ENCODE measurements at regions of chr11 and their contacts with region 1.

Region 1: DNA sequence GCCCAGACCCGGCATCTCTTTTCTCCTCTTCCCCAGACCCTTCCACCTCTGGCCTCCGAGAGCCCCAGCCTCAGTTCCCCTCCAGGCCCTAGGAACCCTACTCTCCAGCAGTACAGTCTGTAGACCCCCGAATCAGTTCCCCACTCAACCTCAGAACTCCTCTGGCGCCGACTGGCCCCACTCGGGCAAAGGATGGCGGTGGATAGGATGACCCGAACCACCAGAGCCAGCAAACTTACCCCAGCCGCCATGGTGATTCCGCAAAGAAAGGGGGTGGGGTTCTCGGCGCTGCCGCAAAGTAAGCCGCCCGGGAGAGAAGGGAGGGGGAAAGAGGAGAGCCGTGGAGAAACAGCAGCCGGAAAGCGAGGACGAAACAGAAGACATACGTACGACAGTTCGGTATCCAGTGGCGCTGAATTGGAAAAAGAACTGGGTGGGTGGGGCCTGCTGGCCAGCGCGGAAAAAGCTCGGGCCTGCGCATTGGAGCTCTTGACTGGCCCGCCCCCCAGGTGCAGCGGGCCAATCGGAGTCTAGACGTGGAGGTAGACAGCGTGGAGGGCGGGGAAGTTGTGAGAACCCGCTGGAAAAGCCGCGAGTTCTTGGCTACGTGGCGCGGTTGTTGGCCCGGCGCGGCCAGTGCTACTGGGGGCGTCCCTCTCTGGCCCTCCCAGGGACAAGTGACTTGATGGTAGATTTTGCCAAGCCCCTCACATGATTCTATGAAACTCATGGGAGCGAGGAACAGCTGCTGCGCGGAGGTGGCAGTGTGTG is at the start of gene EEF1G:
- DNase-seq: peak; percentile 99
- ATAC-seq: peak; percentile 93
- H3K4me3 ChIP-seq: peak within 1 kb of the TSS; percentile 80 to 96 (median 95)
- H3K27ac ChIP-seq: peak within 1 kb of the TSS; percentile 85
- H3K4me1 ChIP-seq: peaks cover 63% of the 10 kb centered on the region
- H3K27me3 ChIP-seq: no peaks in the 10 kb centered on the region; a peak in 1 of 5 replicates
- CTCF ChIP-seq: no peak; the same call in 1 of the 2 replicates
- EP300 ChIP-seq: no peak
- POLR2A ChIP-seq: peak; percentile 89 to 91
- RAD21 ChIP-seq: no peak
- total RNA-seq, gene EEF1G: 1,787 and 2,092 TPM in 2 replicates

Region 2: DNA sequence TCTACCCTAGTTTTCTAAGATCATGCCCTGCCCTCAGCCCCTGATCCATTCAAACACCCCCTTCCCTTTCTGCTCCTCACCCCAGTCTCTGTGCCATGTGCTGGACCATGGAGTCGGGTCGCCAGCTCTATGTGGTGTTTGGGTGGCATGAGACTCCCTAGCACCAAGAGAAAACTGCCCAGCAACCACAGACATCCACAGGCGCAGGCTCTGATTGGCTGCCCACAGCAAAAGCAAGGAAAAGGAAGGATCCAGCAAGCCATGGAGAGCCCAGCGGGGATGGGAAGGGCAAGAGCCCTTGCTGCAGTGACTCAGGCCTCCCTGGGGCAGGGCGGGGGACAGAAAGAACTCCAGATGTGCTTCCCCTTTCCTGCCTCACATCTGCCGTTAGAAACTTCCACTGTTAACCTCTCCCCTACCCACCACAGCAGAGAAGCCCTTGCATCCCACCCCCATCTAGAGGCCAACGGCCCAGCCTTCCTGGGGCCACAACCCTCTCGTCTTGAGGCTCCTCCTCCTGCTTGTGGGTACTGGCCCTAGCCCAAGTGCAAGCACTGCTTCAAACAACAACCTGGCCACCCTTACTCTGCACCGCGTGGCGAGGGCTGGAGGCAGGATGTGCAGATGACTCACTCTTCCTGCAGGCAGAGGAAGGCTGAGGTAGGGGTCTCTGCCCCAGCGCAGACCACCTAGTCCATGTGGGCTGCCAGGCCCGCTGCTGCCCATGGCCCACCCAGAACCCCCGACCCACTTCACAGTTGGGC is 17.5 kb before region 1 on chr11:
- CTCF ChIA-PET with region 1: no interaction called
- POLR2A ChIA-PET with region 1: interaction called, 22 read pairs
- in situ Hi-C with region 1: no loop called
- intact Hi-C with region 1: no loop called
- DNase-seq: no peak
- ATAC-seq: peak; percentile 1
- H3K4me3 ChIP-seq: no peak overlapping the region
- H3K27ac ChIP-seq: peak overlapping the region; percentile 44
- H3K4me1 ChIP-seq: peaks cover 85% of the 10 kb centered on the region
- H3K27me3 ChIP-seq: no peaks in the 10 kb centered on the region
- CTCF ChIP-seq: no peak
- EP300 ChIP-seq: no peak
- POLR2A ChIP-seq: no peak
- RAD21 ChIP-seq: no peak

Region 3: DNA sequence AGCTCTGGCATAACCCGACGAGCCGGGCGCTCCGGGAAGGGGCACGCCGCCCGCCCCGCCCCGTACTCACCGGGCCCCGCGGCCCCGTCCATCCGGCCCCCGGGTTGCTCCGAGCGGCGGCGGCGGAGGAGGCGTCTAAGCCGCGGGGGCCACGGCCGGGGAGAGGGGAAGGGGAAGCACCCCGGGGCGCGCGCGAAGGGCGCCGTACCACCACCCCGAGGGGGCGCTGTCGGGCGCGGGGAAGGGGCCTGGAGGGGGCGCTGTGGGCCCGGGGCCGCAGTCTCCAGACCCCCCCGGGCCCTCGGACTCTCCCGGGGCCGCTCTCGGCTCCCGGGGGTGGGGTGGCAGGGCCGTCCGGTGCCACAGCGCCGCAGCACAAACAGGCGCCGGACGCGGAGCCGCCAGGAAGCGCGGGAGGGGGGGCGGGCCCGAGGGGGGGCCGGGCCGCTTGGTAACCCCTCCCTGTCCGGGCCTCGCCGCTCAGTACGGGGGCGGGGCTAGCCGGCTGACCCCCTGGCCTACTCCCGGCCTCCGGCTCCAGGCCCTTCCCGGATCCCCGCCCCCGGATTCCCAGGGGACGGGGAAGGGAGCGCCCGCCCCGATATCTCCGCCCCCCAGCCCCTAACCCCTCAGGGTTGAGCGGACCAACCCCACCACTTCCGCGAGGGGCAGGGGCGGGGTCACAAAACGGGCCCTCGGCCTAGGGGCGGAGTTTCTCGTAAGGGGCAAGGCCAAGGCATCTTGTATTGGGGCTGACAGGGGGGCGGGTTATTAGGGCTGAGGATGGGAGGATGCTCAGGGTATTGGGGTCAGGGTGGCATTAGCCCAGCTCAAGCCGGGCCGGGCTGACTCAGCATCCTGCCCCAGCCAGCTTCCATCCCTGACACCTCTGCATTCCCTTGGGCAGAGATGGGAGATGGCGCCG is 38.9 kb after region 1 on chr11 and contains the starts of genes EML3 and ROM1:
- CTCF ChIA-PET with region 1: no interaction called
- POLR2A ChIA-PET with region 1: interaction called, 12 read pairs
- in situ Hi-C with region 1: no loop called
- intact Hi-C with region 1: no loop called
- DNase-seq: peak; percentile 70
- ATAC-seq: peak; percentile 74
- H3K4me3 ChIP-seq: peak within 1 kb of the TSS; percentile 77 to 93 (median 77)
- H3K27ac ChIP-seq: peak within 1 kb of the TSS; percentile 64
- H3K4me1 ChIP-seq: peaks cover 50% of the 10 kb centered on the region
- H3K27me3 ChIP-seq: no peaks in the 10 kb centered on the region; a peak in 1 of 5 replicates
- CTCF ChIP-seq: peak; percentile 74
- EP300 ChIP-seq: no peak
- POLR2A ChIP-seq: peak in 1 of 2 experiments; percentile 19; a peak in 1 of 4 replicates
- RAD21 ChIP-seq: peak; percentile 73
- total RNA-seq, gene EML3: 4.6 and 10.6 TPM in 2 replicates
- total RNA-seq, gene ROM1: 1.8 and 2.4 TPM in 2 replicates

Region 4: GRCh38 chr11:62645956-62646824 is 72.4 kb after region 1 on chr11 and contains the start of gene GANAB:
- CTCF ChIA-PET with region 1: no interaction called
- POLR2A ChIA-PET with region 1: interaction called, 13 read pairs
- in situ Hi-C with region 1: no loop called
- intact Hi-C with region 1: no loop called
- DNase-seq: peak; percentile 95
- ATAC-seq: peak; percentile 94
- H3K4me3 ChIP-seq: peak within 1 kb of the TSS; percentile 86 to 96 (median 90)
- H3K27ac ChIP-seq: peak within 1 kb of the TSS; percentile 98
- H3K4me1 ChIP-seq: peaks cover 53% of the 10 kb centered on the region
- H3K27me3 ChIP-seq: no peaks in the 10 kb centered on the region
- CTCF ChIP-seq: no peak
- EP300 ChIP-seq: no peak; a peak in 1 of 4 replicates
- POLR2A ChIP-seq: peak; percentile 92 to 95
- RAD21 ChIP-seq: no peak
- total RNA-seq, gene GANAB: 50.8 and 99.5 TPM in 2 replicates

Region 5: DNA sequence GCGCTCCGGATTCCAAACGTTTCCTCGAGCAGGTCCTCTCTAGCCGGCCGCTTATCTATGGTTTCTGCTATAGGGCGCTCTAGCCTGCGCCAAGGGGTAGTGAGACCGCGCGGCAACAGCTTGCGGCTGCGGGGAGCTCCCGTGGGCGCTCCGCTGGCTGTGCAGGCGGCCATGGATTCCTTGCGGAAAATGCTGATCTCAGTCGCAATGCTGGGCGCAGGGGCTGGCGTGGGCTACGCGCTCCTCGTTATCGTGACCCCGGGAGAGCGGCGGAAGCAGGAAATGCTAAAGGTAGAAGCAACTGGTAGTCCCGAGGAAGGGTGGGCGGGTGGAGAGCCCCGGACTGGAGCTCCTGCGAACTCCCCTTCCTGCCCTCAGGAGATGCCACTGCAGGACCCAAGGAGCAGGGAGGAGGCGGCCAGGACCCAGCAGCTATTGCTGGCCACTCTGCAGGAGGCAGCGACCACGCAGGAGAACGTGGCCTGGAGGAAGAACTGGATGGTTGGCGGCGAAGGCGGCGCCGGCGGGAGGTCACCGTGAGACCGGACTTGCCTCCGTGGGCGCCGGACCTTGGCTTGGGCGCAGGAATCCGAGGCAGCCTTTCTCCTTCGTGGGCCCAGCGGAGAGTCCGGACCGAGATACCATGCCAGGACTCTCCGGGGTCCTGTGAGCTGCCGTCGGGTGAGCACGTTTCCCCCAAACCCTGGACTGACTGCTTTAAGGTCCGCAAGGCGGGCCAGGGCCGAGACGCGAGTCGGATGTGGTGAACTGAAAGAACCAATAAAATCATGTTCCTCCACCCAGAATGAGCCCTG is 98.0 kb after region 1 on chr11 and contains the starts of genes LBHD1 and UQCC3:
- CTCF ChIA-PET with region 1: no interaction called
- POLR2A ChIA-PET with region 1: interaction called, 11 read pairs
- in situ Hi-C with region 1: no loop called
- intact Hi-C with region 1: no loop called
- DNase-seq: peak; percentile 79
- ATAC-seq: peak; percentile 83
- H3K4me3 ChIP-seq: peak within 1 kb of the TSS; percentile 76 to 98 (median 91)
- H3K27ac ChIP-seq: peak within 1 kb of the TSS; percentile 90
- H3K4me1 ChIP-seq: peaks cover 59% of the 10 kb centered on the region
- H3K27me3 ChIP-seq: no peaks in the 10 kb centered on the region; a peak in 1 of 5 replicates
- CTCF ChIP-seq: no peak; the same call in none of the 2 replicates
- EP300 ChIP-seq: peak in 1 of 2 experiments; percentile 21; a peak in 1 of 4 replicates
- POLR2A ChIP-seq: peak; percentile 80 to 82
- RAD21 ChIP-seq: no peak
- total RNA-seq, gene LBHD1: 1.4 and 3.7 TPM in 2 replicates
- total RNA-seq, gene UQCC3: 12.1 and 16.0 TPM in 2 replicates

Region 6: GRCh38 chr11:62694455-62695167 is 120.8 kb after region 1 on chr11:
- CTCF ChIA-PET with region 1: no interaction called
- POLR2A ChIA-PET with region 1: no interaction called
- in situ Hi-C with region 1: no loop called
- intact Hi-C with region 1: no loop called
- DNase-seq: peak; percentile 70
- ATAC-seq: peak; percentile 86
- H3K4me3 ChIP-seq: no peak overlapping the region
- H3K27ac ChIP-seq: no peak overlapping the region
- H3K4me1 ChIP-seq: no peaks in the 10 kb centered on the region
- H3K27me3 ChIP-seq: no peaks in the 10 kb centered on the region
- CTCF ChIP-seq: peak; percentile 85
- EP300 ChIP-seq: no peak
- POLR2A ChIP-seq: no peak
- RAD21 ChIP-seq: peak; percentile 56

Measured in HepG2 (cell line).